ENCODE measurements at regions of chr13 and their contacts with region 1.

Region 1: DNA sequence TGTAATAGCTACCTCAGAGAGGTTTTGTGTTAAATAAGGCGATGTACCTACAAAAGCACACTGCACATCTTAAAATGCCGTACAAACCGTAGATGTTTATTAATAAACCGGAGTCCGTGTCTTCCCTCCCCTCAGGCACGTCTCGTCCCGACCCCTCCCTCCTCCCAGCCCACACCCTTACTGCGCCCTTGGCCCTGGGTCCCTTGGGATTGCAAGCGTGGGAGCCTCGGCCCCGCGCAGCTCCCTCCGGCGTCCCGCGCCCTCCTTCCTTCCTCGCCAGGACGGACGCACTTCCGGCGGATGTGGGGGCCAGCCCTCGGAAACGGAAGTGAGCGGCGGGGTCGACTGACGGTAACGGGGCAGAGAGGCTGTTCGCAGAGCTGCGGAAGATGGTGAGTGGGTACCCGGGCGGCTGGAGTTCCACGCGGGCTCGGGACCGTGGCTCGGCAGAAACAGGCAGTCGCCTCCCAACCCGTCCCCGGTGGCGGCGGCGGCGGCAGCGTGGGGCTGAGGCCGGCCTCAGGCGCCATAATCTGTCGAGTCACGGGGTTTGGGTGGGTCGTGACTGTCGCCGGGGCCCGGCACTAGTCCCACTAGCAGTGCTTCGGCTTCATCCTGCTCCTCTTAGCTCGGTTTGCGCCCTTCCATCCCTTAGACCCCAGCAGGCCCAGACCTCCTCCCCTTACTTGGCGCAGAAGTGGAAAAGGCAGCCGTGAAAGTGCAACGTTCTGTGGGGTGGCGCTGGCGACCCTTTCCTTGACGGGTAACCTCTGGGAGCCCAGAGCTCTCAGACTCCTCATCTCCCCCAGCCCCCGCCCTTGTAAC is at the start of gene POMP:
- DNase-seq: peak; percentile 90
- H3K4me3 Mint-ChIP-seq: peak within 1 kb of the TSS; percentile 97
- H3K27ac Mint-ChIP-seq: peak within 1 kb of the TSS; percentile 97
- H3K4me1 Mint-ChIP-seq: peaks cover 59% of the 10 kb centered on the region
- H3K27me3 Mint-ChIP-seq: no peaks in the 10 kb centered on the region
- total RNA-seq, gene POMP: 147 TPM in 2 replicates

Region 2: GRCh38 chr13:27620377-27621115 is 1038.5 kb before region 1 on chr13 and contains the start of gene LNX2:
- intact Hi-C with region 1: loop called (anchors 5 kb)
- DNase-seq: peak; percentile 97
- H3K4me3 Mint-ChIP-seq: peak within 1 kb of the TSS; percentile 88
- H3K27ac Mint-ChIP-seq: peak within 1 kb of the TSS; percentile 88
- H3K4me1 Mint-ChIP-seq: peaks cover 57% of the 10 kb centered on the region
- H3K27me3 Mint-ChIP-seq: no peaks in the 10 kb centered on the region
- total RNA-seq, gene LNX2: 4.1 and 4.5 TPM in 2 replicates

Region 3: GRCh38 chr13:28268800-28269223 is 390.2 kb before region 1 on chr13:
- intact Hi-C with region 1: loop called (anchors 2 kb)
- DNase-seq: no peak
- H3K4me3 Mint-ChIP-seq: peak overlapping the region; percentile 49
- H3K27ac Mint-ChIP-seq: peak overlapping the region; percentile 70
- H3K4me1 Mint-ChIP-seq: peaks cover 27% of the 10 kb centered on the region
- H3K27me3 Mint-ChIP-seq: no peaks in the 10 kb centered on the region

Region 4: DNA sequence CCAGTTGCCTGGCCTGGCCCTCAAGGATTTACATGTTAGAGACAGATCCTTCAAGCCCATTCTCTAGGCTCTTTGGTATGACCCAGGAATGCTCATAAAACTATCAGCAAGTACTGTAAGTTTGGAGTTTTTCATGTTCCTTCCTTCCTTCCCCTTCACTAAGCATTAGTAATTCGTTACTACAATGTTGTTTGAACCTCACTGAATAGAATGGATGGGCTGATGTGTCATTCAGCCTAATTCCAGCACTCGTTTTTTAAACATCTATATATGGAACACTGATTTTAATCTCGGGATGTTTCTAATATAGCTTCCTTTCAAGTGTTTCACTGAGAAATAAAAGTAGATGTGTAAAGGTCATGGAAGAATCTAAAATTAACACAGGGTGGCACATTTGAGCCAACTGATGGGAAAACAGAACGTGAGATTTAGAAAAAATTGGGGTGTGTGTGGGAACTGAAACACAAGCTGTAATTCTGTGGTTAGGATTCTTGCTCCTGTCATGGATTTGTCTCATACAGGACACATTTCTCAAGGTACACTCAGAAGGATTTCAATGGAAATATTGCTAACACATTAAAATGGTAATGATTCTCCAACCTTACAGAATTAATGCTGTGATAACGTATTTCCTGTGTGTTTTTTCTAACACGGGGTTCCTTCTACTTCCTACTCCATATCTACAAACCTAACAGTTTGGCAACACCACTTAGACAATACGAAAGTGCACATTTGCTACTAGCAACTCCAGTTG is 257.5 kb before region 1 on chr13:
- intact Hi-C with region 1: no loop called
- DNase-seq: no peak
- H3K4me3 Mint-ChIP-seq: no peak overlapping the region
- H3K27ac Mint-ChIP-seq: peak overlapping the region; percentile 59
- H3K4me1 Mint-ChIP-seq: peaks cover 10% of the 10 kb centered on the region
- H3K27me3 Mint-ChIP-seq: no peaks in the 10 kb centered on the region

Region 5: GRCh38 chr13:28493740-28494503 is 165.1 kb before region 1 on chr13:
- intact Hi-C with region 1: loop called (anchors 1 kb)
- DNase-seq: no peak
- H3K4me3 Mint-ChIP-seq: peak overlapping the region; percentile 85
- H3K27ac Mint-ChIP-seq: no peak overlapping the region
- H3K4me1 Mint-ChIP-seq: peaks cover 49% of the 10 kb centered on the region
- H3K27me3 Mint-ChIP-seq: peaks cover 41% of the 10 kb centered on the region

Region 6: GRCh38 chr13:28611654-28612131 is 47.3 kb before region 1 on chr13:
- intact Hi-C with region 1: loop called (anchors 2 kb)
- DNase-seq: peak; percentile 19
- H3K4me3 Mint-ChIP-seq: peak overlapping the region; percentile 46
- H3K27ac Mint-ChIP-seq: peak overlapping the region; percentile 57
- H3K4me1 Mint-ChIP-seq: peaks cover 41% of the 10 kb centered on the region
- H3K27me3 Mint-ChIP-seq: no peaks in the 10 kb centered on the region

Region 7: DNA sequence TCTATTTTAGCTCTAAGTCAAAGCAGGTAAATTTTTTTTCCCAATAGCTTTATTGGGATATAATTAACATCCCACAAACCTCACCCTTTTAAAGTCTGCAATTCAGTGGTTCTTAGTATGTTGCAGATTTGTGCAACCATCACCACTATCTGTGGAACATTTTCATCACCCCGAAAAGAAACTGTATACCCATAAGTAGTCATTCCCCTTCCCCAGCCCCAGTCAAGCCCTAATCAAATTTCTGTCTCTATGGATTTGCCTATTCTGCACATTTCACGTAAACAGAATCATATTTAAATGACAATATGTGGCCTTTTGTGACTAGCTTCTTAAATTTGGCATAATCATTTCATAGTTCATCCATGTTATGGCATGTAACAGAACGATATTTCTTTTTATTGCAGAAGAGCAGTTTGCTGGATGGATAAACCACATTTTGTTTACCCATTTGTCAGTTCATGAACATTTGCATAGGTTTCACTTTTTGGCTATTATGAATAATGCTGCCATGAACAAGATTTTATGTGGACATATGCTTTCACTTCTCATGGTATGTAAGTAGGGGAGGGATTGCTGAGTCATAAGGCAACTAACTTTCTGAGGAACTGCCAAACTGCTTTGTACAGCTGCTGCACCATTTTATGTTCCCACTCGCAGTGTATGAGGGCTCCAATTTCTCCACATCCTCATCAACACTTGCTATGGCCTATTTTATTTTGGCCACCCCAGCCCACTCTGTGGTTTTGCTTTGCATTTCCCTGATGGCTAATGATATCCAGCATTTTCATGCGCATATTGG is 48.8 kb after region 1 on chr13:
- intact Hi-C with region 1: loop called (anchors 1 kb)
- DNase-seq: no peak
- H3K4me3 Mint-ChIP-seq: no peak overlapping the region
- H3K27ac Mint-ChIP-seq: peak overlapping the region; percentile 6
- H3K4me1 Mint-ChIP-seq: peaks cover 12% of the 10 kb centered on the region
- H3K27me3 Mint-ChIP-seq: no peaks in the 10 kb centered on the region

Region 8: GRCh38 chr13:28792992-28793391 is 134.0 kb after region 1 on chr13:
- intact Hi-C with region 1: loop called (anchors 1 kb)
- DNase-seq: no peak
- H3K4me3 Mint-ChIP-seq: no peak overlapping the region
- H3K27ac Mint-ChIP-seq: no peak overlapping the region
- H3K4me1 Mint-ChIP-seq: peaks cover 4% of the 10 kb centered on the region
- H3K27me3 Mint-ChIP-seq: peaks cover 21% of the 10 kb centered on the region

Region 9: GRCh38 chr13:28837111-28837510 is 178.1 kb after region 1 on chr13:
- intact Hi-C with region 1: no loop called
- DNase-seq: no peak
- H3K4me3 Mint-ChIP-seq: no peak overlapping the region
- H3K27ac Mint-ChIP-seq: no peak overlapping the region
- H3K4me1 Mint-ChIP-seq: no peaks in the 10 kb centered on the region
- H3K27me3 Mint-ChIP-seq: peaks cover 2% of the 10 kb centered on the region